Right ventricle myocardium inferior (tissue), 1 donor: ENCODE measurements at regions of chr3 and their contacts with region 1.

Region 1: DNA sequence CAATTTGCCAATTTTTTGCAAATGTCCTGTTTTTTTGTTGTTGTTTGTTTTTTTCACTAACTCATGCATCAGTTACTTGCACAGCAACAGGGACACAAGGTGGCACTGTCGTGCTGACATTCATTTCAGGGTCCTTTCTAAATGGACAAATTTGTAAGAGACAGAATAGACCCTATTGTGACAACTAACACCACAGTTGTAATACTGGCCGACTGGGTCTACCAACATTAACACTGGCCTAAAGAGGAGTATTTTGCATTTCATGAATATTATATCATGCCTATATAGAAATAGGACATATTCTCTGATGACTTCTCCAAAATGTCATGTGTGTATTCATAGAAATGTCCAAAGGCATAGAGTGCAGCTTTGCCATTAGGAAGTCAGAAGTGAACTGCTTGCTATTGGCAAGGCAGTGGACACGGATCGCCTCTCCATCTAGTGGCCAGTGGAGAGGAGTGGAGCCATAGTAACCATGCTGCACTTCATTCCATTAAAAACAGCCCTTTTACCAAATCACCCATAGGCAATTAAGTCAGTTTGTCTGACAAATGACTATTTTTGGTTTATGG is 54.8 kb downstream of the ZBTB20 start:
- DNase-seq: peak; percentile 71
- ATAC-seq: peak; percentile 98

Region 2: GRCh38 chr3:114624571-114625181 is 467.6 kb before region 1 on chr3:
- intact Hi-C with region 1: loop called (anchors 10 kb)
- DNase-seq: peak; percentile 95
- ATAC-seq: peak; percentile 95

Region 3: GRCh38 chr3:114827495-114827894 is 264.8 kb before region 1 on chr3:
- intact Hi-C with region 1: loop called (anchors 5 kb)
- DNase-seq: no peak
- ATAC-seq: peak; percentile 62

Region 4: DNA sequence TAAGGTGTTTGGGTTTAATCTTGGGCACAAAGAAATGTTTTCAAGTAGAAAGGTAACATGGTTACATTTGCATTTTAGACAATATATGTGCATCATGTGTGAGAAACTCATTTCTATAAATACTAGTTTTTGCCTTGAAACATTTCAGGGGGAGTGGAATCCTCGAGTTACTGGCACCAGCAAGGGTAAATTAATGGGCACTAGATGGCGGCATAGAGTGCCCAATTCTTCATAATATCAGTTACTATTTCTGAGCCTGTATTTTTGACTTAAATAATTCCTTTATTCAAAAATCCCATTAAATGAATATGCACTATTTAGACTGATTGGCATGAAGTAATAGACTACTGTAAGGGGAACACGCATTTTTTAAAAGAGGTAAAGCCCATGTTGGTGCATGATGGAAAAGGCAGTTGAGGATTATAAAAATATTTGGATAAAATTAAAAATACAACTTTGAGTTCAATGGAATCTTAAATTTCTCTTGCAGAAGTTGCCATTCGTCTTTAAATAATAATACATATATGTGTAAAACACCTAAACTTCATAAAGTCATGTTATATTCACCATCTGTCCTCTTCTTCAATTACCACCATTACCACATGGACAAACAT is 51.5 kb before region 1 on chr3:
- intact Hi-C with region 1: loop called (anchors 5 kb)
- DNase-seq: no peak
- ATAC-seq: no peak